Activated T-helper 2 cell treated with anti-CD3 and anti-CD28 coated beads, Interferon-gamma antibody, Interleukin-2, Interleukin-4, amounts not matched to agents 10 μg/mL and 5 μg/mL and 100 μg/mL, durations not matched to agents 14 hours and 24 hours and 36 hours (primary cell): ENCODE measurements at regions of chr1 and their contacts with region 1.

Region 1: DNA sequence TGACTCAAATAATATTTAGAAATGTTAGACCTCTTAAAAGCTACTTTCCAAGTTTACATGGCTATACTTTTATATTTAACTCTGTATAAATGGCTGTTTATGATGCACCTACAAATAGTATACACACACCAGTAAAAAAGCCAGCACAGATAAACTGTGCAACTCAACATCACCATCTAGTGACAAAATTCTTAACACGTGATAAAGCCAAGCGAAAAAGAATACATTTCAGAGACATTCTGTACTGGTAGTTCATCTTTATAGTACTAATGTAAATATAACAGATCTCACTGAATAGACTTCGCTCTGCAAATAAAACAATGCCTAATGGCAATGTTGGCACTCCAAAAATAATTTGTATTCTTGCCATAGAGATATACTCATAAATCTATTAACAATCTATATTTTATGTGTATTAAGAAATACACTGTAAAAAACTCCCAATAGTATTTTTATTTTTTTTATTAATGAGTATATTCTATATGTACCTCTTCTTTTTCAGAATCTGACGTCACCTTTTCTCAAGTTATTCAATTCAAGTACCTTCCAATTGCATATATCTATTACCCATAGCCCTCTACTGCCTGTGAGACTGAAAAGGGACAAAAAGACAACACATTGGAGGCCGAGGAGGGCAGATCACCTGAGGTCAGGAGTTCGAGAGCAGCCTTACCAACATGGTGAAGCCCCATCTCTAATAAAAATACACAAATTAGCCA is 100.2 kb downstream of the DPYD start:
- DNase-seq: no peak
- H3K4me3 Mint-ChIP-seq: no peak overlapping the region
- H3K27ac Mint-ChIP-seq: no peak overlapping the region
- H3K4me1 Mint-ChIP-seq: no peaks in the 10 kb centered on the region
- H3K27me3 Mint-ChIP-seq: no peaks in the 10 kb centered on the region

Region 2: GRCh38 chr1:96966536-96967138 is 854.0 kb before region 1 on chr1:
- intact Hi-C with region 1: loop called (anchors 2 kb)
- DNase-seq: peak; percentile 52
- H3K4me3 Mint-ChIP-seq: no peak overlapping the region
- H3K27ac Mint-ChIP-seq: no peak overlapping the region
- H3K4me1 Mint-ChIP-seq: no peaks in the 10 kb centered on the region
- H3K27me3 Mint-ChIP-seq: peaks cover 4% of the 10 kb centered on the region

Region 3: DNA sequence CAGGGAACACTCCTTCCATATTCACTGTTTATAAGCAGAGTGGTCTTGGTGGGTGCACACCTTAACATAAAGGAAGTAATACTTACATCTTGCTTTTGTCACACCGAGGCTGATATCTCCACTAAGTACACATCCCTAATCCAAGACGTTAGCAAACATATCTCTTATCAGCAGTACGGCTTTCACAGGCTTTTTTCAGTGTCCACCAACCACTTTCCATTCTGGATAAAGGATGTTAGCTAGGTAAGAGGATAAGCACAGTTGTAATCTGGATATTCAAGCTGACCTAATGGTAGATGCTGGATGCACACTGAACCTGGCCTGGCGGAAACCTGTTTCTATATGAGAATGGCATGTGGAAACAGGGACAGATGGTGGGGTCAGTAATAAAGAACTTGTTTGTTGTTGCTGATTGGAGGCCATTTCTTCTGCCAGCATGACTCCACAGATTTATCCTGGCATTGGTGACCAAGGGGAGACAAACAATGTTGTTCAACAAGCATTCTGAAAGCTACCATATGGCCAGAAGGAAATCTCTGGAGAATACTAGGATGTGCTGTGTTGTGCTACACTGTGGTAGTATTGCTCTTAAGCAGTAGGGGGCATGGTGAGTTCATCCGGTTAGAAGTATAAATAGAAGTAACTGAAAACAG is 682.6 kb before region 1 on chr1:
- intact Hi-C with region 1: loop called (anchors 10 kb)
- DNase-seq: no peak
- H3K4me3 Mint-ChIP-seq: no peak overlapping the region
- H3K27ac Mint-ChIP-seq: no peak overlapping the region
- H3K4me1 Mint-ChIP-seq: no peaks in the 10 kb centered on the region
- H3K27me3 Mint-ChIP-seq: no peaks in the 10 kb centered on the region

Region 4: GRCh38 chr1:97186404-97186803 is 634.2 kb before region 1 on chr1:
- intact Hi-C with region 1: loop called (anchors 2 kb)
- DNase-seq: no peak
- H3K4me3 Mint-ChIP-seq: no peak overlapping the region
- H3K27ac Mint-ChIP-seq: no peak overlapping the region
- H3K4me1 Mint-ChIP-seq: no peaks in the 10 kb centered on the region
- H3K27me3 Mint-ChIP-seq: no peaks in the 10 kb centered on the region

Region 5: DNA sequence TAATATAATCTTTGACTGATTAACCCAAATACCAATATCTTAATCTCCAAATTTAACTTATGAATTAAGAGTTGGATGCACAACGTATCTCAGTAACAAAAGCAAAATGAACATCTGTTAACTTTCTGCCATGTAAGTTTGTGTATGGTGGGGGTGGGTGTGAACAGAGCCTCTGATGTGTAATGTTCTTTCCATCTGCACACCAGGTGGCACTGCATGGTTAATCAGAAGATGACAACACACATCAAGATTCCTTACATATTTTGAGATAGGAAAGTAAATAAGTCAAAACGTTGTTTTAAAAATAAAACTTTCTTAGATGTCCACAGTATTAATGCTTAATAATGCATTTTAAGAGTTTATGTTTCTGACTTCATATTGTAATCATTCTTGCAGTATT is 151.7 kb before region 1 on chr1:
- intact Hi-C with region 1: loop called (anchors 5 kb)
- DNase-seq: no peak
- H3K4me3 Mint-ChIP-seq: no peak overlapping the region
- H3K27ac Mint-ChIP-seq: no peak overlapping the region
- H3K4me1 Mint-ChIP-seq: no peaks in the 10 kb centered on the region
- H3K27me3 Mint-ChIP-seq: no peaks in the 10 kb centered on the region